CD8-positive, alpha-beta T cell (primary cell): ENCODE measurements at regions of chr4 and their contacts with region 1.

Region 1: DNA sequence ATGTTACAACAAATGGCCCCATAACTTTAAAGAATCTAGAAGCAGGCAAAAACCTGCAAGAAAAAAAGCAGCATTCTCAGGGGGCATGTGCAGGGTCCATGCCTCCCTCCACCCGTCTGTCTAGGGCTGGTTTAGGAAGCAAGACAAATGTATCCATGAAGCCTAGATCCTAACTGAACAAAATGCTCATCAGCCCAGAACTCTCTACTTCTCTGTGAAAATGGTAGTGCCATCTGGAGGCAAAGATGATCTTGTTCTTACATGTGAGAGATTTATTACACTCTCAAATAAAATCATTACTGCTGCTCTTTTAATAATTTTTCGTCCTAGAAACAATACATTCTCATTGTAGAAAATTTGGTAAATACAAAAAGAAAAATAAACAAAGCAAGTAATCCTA is 26.7 kb downstream of the NR3C2 start:
- DNase-seq: peak in 2 of 9 experiments; percentile 15 to 26
- ATAC-seq: no peak
- H3K4me3 ChIP-seq: no peak overlapping the region
- H3K4me3 Mint-ChIP-seq: no peak overlapping the region
- H3K27ac ChIP-seq: no peak overlapping the region
- H3K27ac Mint-ChIP-seq: no peak overlapping the region
- H3K4me1 ChIP-seq: peaks cover 22% of the 10 kb centered on the region
- H3K4me1 Mint-ChIP-seq: peaks cover 81% of the 10 kb centered on the region
- H3K27me3 ChIP-seq: no peaks in the 10 kb centered on the region
- H3K27me3 Mint-ChIP-seq: no peaks in the 10 kb centered on the region
- CTCF ChIP-seq: no peak

Region 2: DNA sequence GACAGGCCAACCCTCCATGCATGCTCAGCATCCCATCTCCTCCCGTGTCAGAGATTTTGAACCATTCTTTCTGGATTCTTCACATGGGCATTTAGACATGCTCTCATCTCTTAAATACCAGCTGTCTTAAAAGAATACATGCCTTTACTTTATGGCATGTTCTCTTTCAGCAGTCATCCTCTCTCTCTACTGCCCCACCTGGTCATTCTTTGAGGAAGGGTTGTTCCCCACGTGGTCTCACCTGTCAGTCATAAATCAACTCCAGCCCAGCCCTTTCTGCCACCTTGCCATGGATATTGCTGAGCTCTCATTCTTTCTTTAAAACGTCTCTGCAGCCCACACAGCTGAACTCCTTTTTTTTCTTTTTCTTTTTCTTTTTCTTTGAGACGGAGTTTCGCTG is 572.3 kb before region 1 on chr4:
- CTCF ChIA-PET with region 1: no interaction called
- POLR2A ChIA-PET with region 1: no interaction called
- intact Hi-C with region 1: no loop called
- DNase-seq: peak in 2 of 9 experiments; percentile 24 to 42
- ATAC-seq: peak; percentile 51
- H3K4me3 ChIP-seq: no peak overlapping the region
- H3K4me3 Mint-ChIP-seq: no peak overlapping the region
- H3K27ac ChIP-seq: no peak overlapping the region
- H3K27ac Mint-ChIP-seq: no peak overlapping the region
- H3K4me1 ChIP-seq: no peaks in the 10 kb centered on the region
- H3K4me1 Mint-ChIP-seq: no peaks in the 10 kb centered on the region
- H3K27me3 ChIP-seq: no peaks in the 10 kb centered on the region
- H3K27me3 Mint-ChIP-seq: no peaks in the 10 kb centered on the region
- CTCF ChIP-seq: no peak

Region 3: DNA sequence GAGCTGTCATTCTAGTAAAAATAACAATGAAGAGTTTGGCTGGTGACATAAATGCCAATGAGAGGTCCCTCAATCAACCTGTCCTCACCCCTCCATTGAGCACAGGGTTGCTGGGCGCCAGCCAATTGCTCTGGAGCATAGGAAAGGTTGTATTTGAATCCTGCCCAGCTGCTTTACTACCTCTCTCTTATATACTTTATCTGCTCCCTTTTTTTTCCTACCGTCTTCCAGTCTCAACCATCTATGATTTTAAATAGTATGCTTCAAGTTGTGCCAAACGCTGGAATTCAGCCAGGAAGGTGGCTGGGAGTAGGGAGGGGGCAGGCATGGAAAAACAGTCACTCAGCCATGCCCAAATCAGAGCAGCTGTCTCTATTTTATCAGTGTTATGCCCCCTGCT is 127.1 kb before region 1 on chr4:
- CTCF ChIA-PET with region 1: no interaction called
- POLR2A ChIA-PET with region 1: no interaction called
- intact Hi-C with region 1: loop called in 1 of 2 experiments (anchors 10 kb)
- DNase-seq: no peak
- ATAC-seq: no peak
- H3K4me3 ChIP-seq: no peak overlapping the region
- H3K4me3 Mint-ChIP-seq: no peak overlapping the region
- H3K27ac ChIP-seq: no peak overlapping the region
- H3K27ac Mint-ChIP-seq: no peak overlapping the region
- H3K4me1 ChIP-seq: peaks cover 5% of the 10 kb centered on the region
- H3K4me1 Mint-ChIP-seq: peaks cover 68% of the 10 kb centered on the region
- H3K27me3 ChIP-seq: no peaks in the 10 kb centered on the region
- H3K27me3 Mint-ChIP-seq: no peaks in the 10 kb centered on the region
- CTCF ChIP-seq: no peak

Region 4: DNA sequence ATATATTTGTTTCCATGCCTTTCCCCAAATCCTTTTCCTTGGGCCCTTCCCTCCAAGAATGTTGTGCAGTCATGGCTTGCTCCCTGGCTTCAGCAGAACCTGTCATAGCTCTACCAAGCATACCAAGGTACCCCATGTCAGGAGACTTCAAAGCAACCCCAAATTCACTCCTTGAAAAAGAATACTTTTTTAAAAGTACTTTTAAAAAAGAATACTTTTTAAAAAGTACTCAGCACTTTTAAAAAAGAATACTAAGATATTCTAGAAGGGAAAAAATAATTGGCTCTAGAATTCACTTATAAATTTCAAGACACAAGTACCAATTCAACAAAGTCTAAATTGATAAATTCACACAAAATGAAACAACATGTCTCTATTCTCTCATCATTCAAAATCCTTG is 49.2 kb before region 1 on chr4:
- CTCF ChIA-PET with region 1: no interaction called
- POLR2A ChIA-PET with region 1: no interaction called
- intact Hi-C with region 1: loop called in 1 of 2 experiments (anchors 5 kb)
- DNase-seq: no peak
- ATAC-seq: no peak
- H3K4me3 ChIP-seq: no peak overlapping the region
- H3K4me3 Mint-ChIP-seq: no peak overlapping the region
- H3K27ac ChIP-seq: no peak overlapping the region
- H3K27ac Mint-ChIP-seq: no peak overlapping the region
- H3K4me1 ChIP-seq: peaks cover 10% of the 10 kb centered on the region
- H3K4me1 Mint-ChIP-seq: peaks cover 58% of the 10 kb centered on the region
- H3K27me3 ChIP-seq: no peaks in the 10 kb centered on the region
- H3K27me3 Mint-ChIP-seq: no peaks in the 10 kb centered on the region
- CTCF ChIP-seq: no peak

Region 5: DNA sequence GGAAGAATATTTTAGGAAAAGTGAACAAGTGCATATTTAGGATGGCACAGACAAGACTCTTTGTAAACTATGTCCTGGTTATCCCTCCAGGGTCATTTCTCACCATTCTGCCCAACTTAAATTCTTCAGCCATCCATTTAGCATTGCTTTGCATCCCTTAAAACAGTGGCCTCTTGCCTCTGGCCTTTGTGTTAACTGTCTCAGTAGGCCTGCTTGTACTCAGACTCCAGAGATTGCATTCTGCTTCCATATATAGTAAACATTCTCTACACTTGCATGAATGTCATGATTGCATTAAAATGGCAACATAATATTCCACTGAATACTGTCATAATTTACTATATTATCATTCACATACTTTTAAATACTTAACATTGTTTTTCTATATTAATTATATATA is 16.5 kb before region 1 on chr4:
- CTCF ChIA-PET with region 1: no interaction called
- POLR2A ChIA-PET with region 1: no interaction called
- intact Hi-C with region 1: loop called in 1 of 2 experiments (anchors 2 kb)
- DNase-seq: no peak
- ATAC-seq: no peak
- H3K4me3 ChIP-seq: no peak overlapping the region
- H3K4me3 Mint-ChIP-seq: no peak overlapping the region
- H3K27ac ChIP-seq: no peak overlapping the region
- H3K27ac Mint-ChIP-seq: no peak overlapping the region
- H3K4me1 ChIP-seq: no peaks in the 10 kb centered on the region
- H3K4me1 Mint-ChIP-seq: peaks cover 54% of the 10 kb centered on the region
- H3K27me3 ChIP-seq: no peaks in the 10 kb centered on the region
- H3K27me3 Mint-ChIP-seq: no peaks in the 10 kb centered on the region
- CTCF ChIP-seq: no peak

Region 6: DNA sequence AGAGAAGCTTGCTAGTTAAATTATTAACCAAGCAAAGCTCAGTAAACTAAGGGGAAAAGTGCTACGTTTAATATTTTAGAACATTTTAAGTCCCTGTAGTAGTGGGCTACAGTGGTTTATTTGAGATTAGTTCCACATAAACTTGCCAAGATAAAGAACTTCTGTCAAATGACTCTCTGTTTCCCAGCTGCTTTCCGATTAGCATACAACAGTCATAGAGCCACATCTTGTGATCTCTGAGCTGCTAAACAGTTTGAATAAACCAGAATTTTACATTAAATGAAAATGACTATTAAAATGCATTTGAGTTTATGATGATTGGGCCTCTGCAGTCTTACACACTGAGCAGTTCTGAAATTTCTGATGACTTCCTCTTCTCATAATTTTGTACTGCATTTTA is 831.7 kb after region 1 on chr4:
- CTCF ChIA-PET with region 1: no interaction called
- POLR2A ChIA-PET with region 1: no interaction called
- intact Hi-C with region 1: no loop called
- DNase-seq: no peak
- ATAC-seq: no peak
- H3K4me3 ChIP-seq: no peak overlapping the region
- H3K4me3 Mint-ChIP-seq: no peak overlapping the region
- H3K27ac ChIP-seq: no peak overlapping the region
- H3K27ac Mint-ChIP-seq: no peak overlapping the region
- H3K4me1 ChIP-seq: no peaks in the 10 kb centered on the region
- H3K4me1 Mint-ChIP-seq: no peaks in the 10 kb centered on the region
- H3K27me3 ChIP-seq: no peaks in the 10 kb centered on the region
- H3K27me3 Mint-ChIP-seq: no peaks in the 10 kb centered on the region
- CTCF ChIP-seq: no peak